CD8-positive, alpha-beta memory T cell (primary cell): ENCODE measurements at regions of chr2 and their contacts with region 1.

Region 1: DNA sequence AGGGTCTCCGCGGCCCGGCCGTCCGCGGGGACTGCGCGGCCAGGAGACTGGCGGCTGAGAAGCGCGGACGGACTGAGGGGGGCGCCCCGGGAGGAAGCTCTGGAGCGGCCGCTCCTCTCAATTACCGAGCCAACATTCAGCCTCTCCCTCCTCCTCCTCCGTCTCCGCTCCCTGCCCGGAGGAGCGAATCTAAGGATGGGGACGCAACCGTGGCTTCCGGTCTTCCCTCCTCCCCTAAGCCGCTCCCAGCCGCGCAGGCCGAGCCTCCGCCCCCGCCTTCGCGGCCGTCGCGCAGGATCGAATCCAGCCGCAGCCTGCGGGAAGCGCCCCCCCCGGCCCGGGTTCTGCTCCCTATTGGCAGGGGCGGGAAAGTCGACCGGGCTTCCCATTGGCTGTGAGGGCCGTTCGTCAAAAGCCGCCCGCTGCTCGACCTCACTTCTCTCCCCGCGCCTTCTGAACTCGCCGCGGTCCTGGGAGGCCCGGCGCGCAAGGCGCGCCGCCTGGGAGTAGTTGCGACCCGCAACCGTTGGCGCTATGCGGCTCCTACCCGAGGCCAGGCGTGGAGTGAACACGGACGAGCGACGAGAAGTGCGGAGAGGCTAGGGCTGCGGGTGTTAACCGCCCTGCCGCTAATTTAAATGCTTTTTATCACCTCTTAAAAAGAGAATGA is at the start of gene HNRNPLL:
- DNase-seq: peak; percentile 87 to 95 (median 89)
- H3K4me3 ChIP-seq: peak within 1 kb of the TSS; percentile 93
- H3K4me3 Mint-ChIP-seq: peak within 1 kb of the TSS; percentile 94 to 97 (median 96)
- H3K27ac ChIP-seq: peak within 1 kb of the TSS; percentile 82
- H3K27ac Mint-ChIP-seq: peak within 1 kb of the TSS; percentile 88 to 99 (median 97)
- H3K4me1 ChIP-seq: peaks cover 22% of the 10 kb centered on the region
- H3K4me1 Mint-ChIP-seq: peaks cover 45 to 58% (median 53%) of the 10 kb centered on the region in 3 donors
- H3K27me3 ChIP-seq: no peaks in the 10 kb centered on the region
- H3K27me3 Mint-ChIP-seq: peaks cover 0 to 2% of the 10 kb centered on the region in 2 donors
- total RNA-seq, gene HNRNPLL: 77.4 to 80.8 TPM

Region 2: GRCh38 chr2:38141501-38141900 is 461.4 kb before region 1 on chr2:
- CTCF ChIA-PET with region 1: no interaction called
- POLR2A ChIA-PET with region 1: no interaction called
- DNase-seq: no peak
- H3K4me3 ChIP-seq: no peak overlapping the region
- H3K4me3 Mint-ChIP-seq: no peak overlapping the region
- H3K27ac ChIP-seq: no peak overlapping the region
- H3K27ac Mint-ChIP-seq: no peak overlapping the region
- H3K4me1 ChIP-seq: no peaks in the 10 kb centered on the region
- H3K4me1 Mint-ChIP-seq: no peaks in the 10 kb centered on the region
- H3K27me3 ChIP-seq: no peaks in the 10 kb centered on the region
- H3K27me3 Mint-ChIP-seq: peaks cover 14 to 27% of the 10 kb centered on the region in 2 donors

Region 3: DNA sequence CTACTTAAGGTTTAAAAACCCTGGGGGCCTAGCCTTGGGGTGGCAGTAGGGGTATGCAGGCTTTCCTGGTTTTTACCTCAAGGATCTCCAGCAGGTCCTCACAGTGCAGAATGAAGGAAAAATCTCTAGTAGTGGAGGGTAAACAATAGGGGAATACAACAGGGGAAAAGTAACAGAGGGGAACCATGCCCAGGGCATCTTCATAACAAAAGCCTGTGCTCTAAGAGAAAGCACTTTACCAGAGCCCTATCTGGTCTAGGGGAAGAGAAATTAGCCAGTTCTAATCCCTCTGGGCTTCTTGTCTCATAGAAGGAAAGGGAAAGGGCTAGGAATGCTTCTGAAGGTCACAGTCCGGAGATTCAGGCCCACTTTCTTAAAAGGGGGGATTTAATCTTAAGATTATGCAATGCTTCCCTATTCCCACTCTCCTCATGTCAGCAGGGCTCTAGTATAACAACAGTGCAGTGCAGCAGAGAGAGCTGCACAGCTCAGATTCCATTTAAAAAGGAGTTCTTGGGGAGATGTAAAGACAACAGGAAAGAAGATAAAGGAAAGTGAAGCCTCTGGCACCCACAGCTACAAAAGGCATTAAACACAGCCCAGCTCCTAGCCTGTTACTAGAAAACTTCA is 377.9 kb before region 1 on chr2:
- CTCF ChIA-PET with region 1: no interaction called
- POLR2A ChIA-PET with region 1: no interaction called
- DNase-seq: no peak
- H3K4me3 ChIP-seq: no peak overlapping the region
- H3K4me3 Mint-ChIP-seq: no peak overlapping the region
- H3K27ac ChIP-seq: no peak overlapping the region
- H3K27ac Mint-ChIP-seq: no peak overlapping the region
- H3K4me1 ChIP-seq: no peaks in the 10 kb centered on the region
- H3K4me1 Mint-ChIP-seq: no peaks in the 10 kb centered on the region
- H3K27me3 ChIP-seq: peaks cover 3% of the 10 kb centered on the region
- H3K27me3 Mint-ChIP-seq: peaks cover 15 to 47% of the 10 kb centered on the region in 2 donors

Region 4: GRCh38 chr2:38581193-38582147 is 21.4 kb before region 1 on chr2:
- CTCF ChIA-PET with region 1: interaction called, 96 read pairs
- POLR2A ChIA-PET with region 1: interaction called, 11 read pairs
- DNase-seq: peak in 3 of 5 donors; percentile 63 to 73 (median 66)
- H3K4me3 ChIP-seq: no peak overlapping the region
- H3K4me3 Mint-ChIP-seq: no peak overlapping the region
- H3K27ac ChIP-seq: no peak overlapping the region
- H3K27ac Mint-ChIP-seq: peak overlapping the region in 7 of 8 donors; percentile 9 to 92 (median 56)
- H3K4me1 ChIP-seq: peaks cover 8% of the 10 kb centered on the region
- H3K4me1 Mint-ChIP-seq: peaks cover 31 to 64% (median 64%) of the 10 kb centered on the region in 3 donors
- H3K27me3 ChIP-seq: no peaks in the 10 kb centered on the region
- H3K27me3 Mint-ChIP-seq: no peaks in the 10 kb centered on the region

Region 5: GRCh38 chr2:38626326-38627035 is 23.6 kb after region 1 on chr2:
- CTCF ChIA-PET with region 1: interaction called, 18 read pairs
- POLR2A ChIA-PET with region 1: interaction called, 4 read pairs
- DNase-seq: peak in 4 of 5 donors; percentile 14 to 62 (median 34)
- H3K4me3 ChIP-seq: no peak overlapping the region
- H3K4me3 Mint-ChIP-seq: peak overlapping the region in 5 of 7 donors; percentile 12 to 54 (median 51)
- H3K27ac ChIP-seq: no peak overlapping the region
- H3K27ac Mint-ChIP-seq: peak overlapping the region; percentile 35 to 93 (median 77)
- H3K4me1 ChIP-seq: peaks cover 8% of the 10 kb centered on the region
- H3K4me1 Mint-ChIP-seq: peaks cover 16 to 27% (median 26%) of the 10 kb centered on the region in 3 donors
- H3K27me3 ChIP-seq: no peaks in the 10 kb centered on the region
- H3K27me3 Mint-ChIP-seq: no peaks in the 10 kb centered on the region

Region 6: DNA sequence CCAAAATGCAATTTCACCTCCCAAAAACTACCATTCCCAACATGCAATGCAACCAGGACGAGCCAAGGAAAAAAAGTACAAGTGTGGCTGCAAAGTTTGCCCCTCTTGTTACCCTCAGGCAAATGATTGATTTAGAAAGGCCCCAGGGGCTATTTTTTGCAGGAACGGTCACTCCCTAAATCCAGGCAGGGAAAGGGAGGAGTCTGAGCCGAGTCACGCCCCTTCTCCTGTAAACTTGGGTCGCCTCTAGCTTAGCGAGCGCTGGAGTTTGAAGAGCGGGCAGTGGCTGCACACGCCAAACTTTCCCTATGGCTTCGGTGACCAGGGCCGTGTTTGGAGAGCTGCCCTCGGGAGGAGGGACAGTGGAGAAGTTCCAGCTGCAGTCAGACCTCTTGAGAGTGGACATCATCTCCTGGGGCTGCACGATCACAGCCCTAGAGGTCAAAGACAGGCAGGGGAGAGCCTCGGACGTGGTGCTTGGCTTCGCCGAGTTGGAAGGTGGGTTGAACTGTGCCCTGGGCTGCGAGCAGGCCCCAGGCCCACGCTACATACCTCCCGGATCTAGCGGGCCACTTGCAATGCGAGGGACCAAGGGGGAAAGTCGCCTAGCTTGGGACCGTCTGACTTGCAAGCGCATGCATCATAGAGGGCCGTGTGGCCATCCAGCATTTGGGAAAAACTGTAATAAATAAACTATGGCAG is 63.1 kb after region 1 on chr2 and contains the start of gene GALM:
- CTCF ChIA-PET with region 1: interaction called, 36 read pairs
- POLR2A ChIA-PET with region 1: interaction called, 57 read pairs
- DNase-seq: peak; percentile 17 to 76 (median 55)
- H3K4me3 ChIP-seq: peak within 1 kb of the TSS; percentile 88
- H3K4me3 Mint-ChIP-seq: peak within 1 kb of the TSS; percentile 82 to 95 (median 88)
- H3K27ac ChIP-seq: peak within 1 kb of the TSS; percentile 60
- H3K27ac Mint-ChIP-seq: peak within 1 kb of the TSS; percentile 91 to 100 (median 99)
- H3K4me1 ChIP-seq: peaks cover 37% of the 10 kb centered on the region
- H3K4me1 Mint-ChIP-seq: peaks cover 56 to 69% (median 66%) of the 10 kb centered on the region in 3 donors
- H3K27me3 ChIP-seq: no peaks in the 10 kb centered on the region
- H3K27me3 Mint-ChIP-seq: no peaks in the 10 kb centered on the region
- total RNA-seq, gene GALM: 107 to 109 TPM

Region 7: DNA sequence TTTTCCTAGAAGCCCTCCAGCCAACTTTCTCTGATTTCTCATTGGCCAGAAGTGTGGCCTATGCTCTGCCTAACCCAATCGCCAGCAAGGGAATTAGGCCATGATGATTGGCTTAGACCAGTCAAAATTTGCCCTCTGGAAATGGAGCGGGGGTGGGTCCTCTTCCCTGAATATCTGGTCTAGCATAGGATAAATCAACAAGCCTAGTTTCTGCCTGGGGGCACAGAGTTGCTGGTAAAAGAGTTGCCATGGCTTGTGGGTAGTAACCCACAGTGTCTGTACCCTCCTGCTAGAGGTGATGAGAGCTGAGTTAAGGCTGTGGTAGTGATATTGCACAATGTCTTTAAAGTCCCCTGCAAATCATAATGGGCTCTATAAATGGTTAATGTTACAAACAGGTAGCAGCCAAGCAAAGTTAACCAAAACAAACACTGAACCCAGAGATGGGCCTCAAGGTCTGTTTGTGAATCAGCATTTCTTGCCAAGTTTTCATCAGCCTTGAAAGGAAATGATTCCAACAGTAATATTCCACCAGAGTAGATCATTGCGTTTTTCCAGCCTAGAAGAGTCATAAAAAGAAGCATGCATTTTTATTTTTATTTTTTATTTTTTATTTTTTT is 82.4 kb after region 1 on chr2:
- CTCF ChIA-PET with region 1: interaction called, 58 read pairs
- POLR2A ChIA-PET with region 1: interaction called, 9 read pairs
- DNase-seq: no peak
- H3K4me3 ChIP-seq: no peak overlapping the region
- H3K4me3 Mint-ChIP-seq: peak overlapping the region in 6 of 7 donors; percentile 29 to 61 (median 46)
- H3K27ac ChIP-seq: no peak overlapping the region
- H3K27ac Mint-ChIP-seq: peak overlapping the region; percentile 61 to 97 (median 89)
- H3K4me1 ChIP-seq: peaks cover 30% of the 10 kb centered on the region
- H3K4me1 Mint-ChIP-seq: peaks cover 37 to 70% (median 69%) of the 10 kb centered on the region in 3 donors
- H3K27me3 ChIP-seq: no peaks in the 10 kb centered on the region
- H3K27me3 Mint-ChIP-seq: no peaks in the 10 kb centered on the region

Region 8: DNA sequence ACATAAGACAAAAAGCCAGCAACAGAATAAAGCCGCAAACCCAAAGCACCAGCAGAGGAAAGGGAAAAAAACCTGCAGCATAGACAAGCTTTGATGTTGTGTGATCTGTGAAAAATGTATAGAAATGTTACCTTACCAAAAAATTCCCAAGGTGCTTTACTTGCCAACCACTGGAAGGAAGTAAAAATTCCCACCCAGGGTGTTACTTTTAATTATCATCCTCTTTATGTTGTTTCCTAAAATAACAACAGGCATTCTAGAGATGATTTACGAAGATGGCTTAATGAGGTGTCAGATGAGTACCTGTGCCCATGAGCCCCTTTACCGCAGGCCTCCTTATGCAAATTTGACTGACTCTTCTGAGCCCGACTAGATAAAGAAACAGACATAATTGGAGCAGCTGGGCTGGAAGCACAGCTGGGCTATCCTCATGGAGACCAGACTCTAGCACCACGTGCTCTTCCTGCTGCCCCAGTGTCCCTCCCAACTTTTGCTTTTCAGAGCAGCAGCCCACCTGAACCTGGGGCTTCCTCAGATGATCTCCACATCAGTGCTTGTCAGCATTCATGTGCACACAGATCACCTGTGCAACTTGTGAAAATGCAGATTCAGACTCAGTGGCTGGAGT is 106.8 kb after region 1 on chr2:
- CTCF ChIA-PET with region 1: interaction called, 8 read pairs
- POLR2A ChIA-PET with region 1: interaction called, 12 read pairs
- DNase-seq: peak in 4 of 5 donors; percentile 36 to 80 (median 68)
- H3K4me3 ChIP-seq: peak overlapping the region; percentile 40
- H3K4me3 Mint-ChIP-seq: peak overlapping the region; percentile 68 to 81 (median 77)
- H3K27ac ChIP-seq: peak overlapping the region; percentile 32
- H3K27ac Mint-ChIP-seq: peak overlapping the region; percentile 92 to 99 (median 96)
- H3K4me1 ChIP-seq: peaks cover 34% of the 10 kb centered on the region
- H3K4me1 Mint-ChIP-seq: peaks cover 64 to 86% (median 76%) of the 10 kb centered on the region in 3 donors
- H3K27me3 ChIP-seq: no peaks in the 10 kb centered on the region
- H3K27me3 Mint-ChIP-seq: no peaks in the 10 kb centered on the region

Region 9: DNA sequence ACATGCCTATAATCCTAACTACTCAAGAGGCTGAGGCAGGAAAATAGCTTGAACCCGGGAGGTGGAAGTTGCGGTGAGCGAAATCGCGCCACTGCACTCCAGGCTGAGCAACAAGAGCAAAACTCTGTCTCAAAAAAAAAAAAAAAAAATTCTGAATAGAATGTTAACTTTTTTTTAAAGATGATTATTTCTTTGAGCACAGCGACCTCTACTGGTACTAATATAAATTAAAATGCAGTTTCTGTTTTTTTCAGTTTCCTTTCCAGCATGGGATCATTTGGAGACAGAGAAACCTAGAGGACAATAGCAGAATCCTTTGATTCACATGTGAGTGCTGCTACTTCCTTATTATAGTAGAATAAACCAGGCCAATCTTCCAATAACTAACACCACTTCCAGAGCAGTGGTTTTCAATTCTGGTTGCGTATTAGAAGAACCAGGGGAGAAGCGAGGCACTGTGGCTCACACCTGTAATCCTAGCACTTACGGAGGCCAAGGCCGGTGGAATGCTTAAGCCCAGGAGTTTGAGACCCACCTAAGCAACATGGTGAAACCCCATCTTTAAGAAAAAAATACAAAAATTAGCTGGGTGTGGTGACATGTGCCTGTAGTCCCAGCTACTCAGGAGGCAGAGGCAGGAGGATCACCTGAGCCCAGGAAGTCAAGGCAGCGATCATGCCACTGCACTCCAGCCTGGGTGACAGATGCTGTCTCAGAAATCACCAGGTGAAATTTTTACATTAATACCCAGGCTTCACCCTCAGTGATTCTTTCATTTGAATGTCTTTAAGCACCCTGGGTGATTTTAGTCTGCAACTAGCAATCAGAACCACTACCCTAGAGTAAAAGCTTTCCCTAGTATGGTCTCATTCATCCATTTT is 138.2 kb after region 1 on chr2:
- CTCF ChIA-PET with region 1: interaction called, 18 read pairs
- POLR2A ChIA-PET with region 1: interaction called, 7 read pairs
- DNase-seq: peak in 3 of 5 donors; percentile 49 to 62 (median 54)
- H3K4me3 ChIP-seq: no peak overlapping the region
- H3K4me3 Mint-ChIP-seq: peak overlapping the region in 5 of 7 donors; percentile 12 to 68 (median 47)
- H3K27ac ChIP-seq: no peak overlapping the region
- H3K27ac Mint-ChIP-seq: peak overlapping the region; percentile 18 to 99 (median 82)
- H3K4me1 ChIP-seq: peaks cover 26% of the 10 kb centered on the region
- H3K4me1 Mint-ChIP-seq: peaks cover 47 to 70% (median 69%) of the 10 kb centered on the region in 3 donors
- H3K27me3 ChIP-seq: no peaks in the 10 kb centered on the region
- H3K27me3 Mint-ChIP-seq: no peaks in the 10 kb centered on the region